Prostate gland (tissue), 2 donors: ENCODE measurements at regions of chr2 and their contacts with region 1.

Region 1: GRCh38 chr2:168246483-168247340 is 683 bp downstream of the STK39 start:
- DNase-seq: peak; percentile 74
- H3K4me3 ChIP-seq: peak overlapping the region; percentile 79 to 80
- H3K27ac ChIP-seq: peak overlapping the region; percentile 88 to 89
- H3K4me1 ChIP-seq: no peaks in the 10 kb centered on the region
- H3K27me3 ChIP-seq: no peaks in the 10 kb centered on the region
- CTCF ChIP-seq: peak; percentile 20 to 45 (median 36)
- POLR2A ChIP-seq: no peak

Region 2: GRCh38 chr2:167862787-167863186 is 383.9 kb before region 1 on chr2:
- intact Hi-C with region 1: no loop called
- DNase-seq: no peak
- H3K4me3 ChIP-seq: no peak overlapping the region
- H3K27ac ChIP-seq: no peak overlapping the region
- H3K4me1 ChIP-seq: no peaks in the 10 kb centered on the region
- H3K27me3 ChIP-seq: no peaks in the 10 kb centered on the region
- CTCF ChIP-seq: no peak
- POLR2A ChIP-seq: no peak

Region 3: GRCh38 chr2:168156661-168157060 is 90.1 kb before region 1 on chr2:
- intact Hi-C with region 1: loop called (anchors 10 kb)
- DNase-seq: peak; percentile 17
- H3K4me3 ChIP-seq: no peak overlapping the region
- H3K27ac ChIP-seq: no peak overlapping the region
- H3K4me1 ChIP-seq: no peaks in the 10 kb centered on the region
- H3K27me3 ChIP-seq: no peaks in the 10 kb centered on the region
- CTCF ChIP-seq: no peak
- POLR2A ChIP-seq: no peak

Region 4: DNA sequence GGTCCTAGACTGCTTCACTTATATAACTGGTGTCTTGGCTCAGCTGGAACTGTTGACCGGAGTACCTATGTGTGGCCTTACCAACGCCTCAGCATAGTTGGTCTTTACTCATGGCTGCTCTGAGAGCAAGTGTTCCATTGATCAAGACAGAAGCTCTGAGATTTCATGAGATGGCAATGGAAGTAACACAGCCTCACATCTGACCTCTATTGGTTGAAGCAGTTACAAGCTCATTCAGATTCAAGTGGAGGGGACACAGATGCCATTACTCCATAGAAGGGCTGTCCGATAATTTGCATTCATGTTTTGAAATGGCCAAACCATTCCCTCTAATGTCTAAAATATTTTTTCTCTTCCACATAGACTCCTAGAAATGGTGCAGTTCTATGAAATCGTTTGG is 47.1 kb after region 1 on chr2:
- intact Hi-C with region 1: no loop called
- DNase-seq: no peak
- H3K4me3 ChIP-seq: no peak overlapping the region
- H3K27ac ChIP-seq: no peak overlapping the region
- H3K4me1 ChIP-seq: no peaks in the 10 kb centered on the region
- H3K27me3 ChIP-seq: no peaks in the 10 kb centered on the region
- CTCF ChIP-seq: no peak
- POLR2A ChIP-seq: no peak